Naive thymus-derived CD8-positive, alpha-beta T cell (primary cell): ENCODE measurements at regions of chr6 and their contacts with region 1.

Region 1: GRCh38 chr6:12011276-12012076 is 636 bp upstream of the HIVEP1 start:
- DNase-seq: peak; percentile 81 to 98 (median 96)
- ATAC-seq: peak; percentile 66 to 76
- H3K4me3 Mint-ChIP-seq: peak overlapping the region; percentile 87 to 100 (median 93)
- H3K27ac Mint-ChIP-seq: peak overlapping the region; percentile 90 to 100 (median 98)
- H3K4me1 Mint-ChIP-seq: peaks cover 31 to 60% (median 56%) of the 10 kb centered on the region in 4 donors
- H3K27me3 Mint-ChIP-seq: no peaks in the 10 kb centered on the region

Region 2: GRCh38 chr6:11889572-11889971 is 121.9 kb before region 1 on chr6:
- POLR2A ChIA-PET with region 1: no interaction called
- DNase-seq: no peak
- ATAC-seq: no peak
- H3K4me3 Mint-ChIP-seq: no peak overlapping the region
- H3K27ac Mint-ChIP-seq: no peak overlapping the region
- H3K4me1 Mint-ChIP-seq: no peaks in the 10 kb centered on the region
- H3K27me3 Mint-ChIP-seq: no peaks in the 10 kb centered on the region

Region 3: GRCh38 chr6:12049165-12049564 is 37.7 kb after region 1 on chr6:
- POLR2A ChIA-PET with region 1: interaction called, 11 read pairs
- DNase-seq: no peak
- ATAC-seq: no peak
- H3K4me3 Mint-ChIP-seq: no peak overlapping the region
- H3K27ac Mint-ChIP-seq: peak overlapping the region; percentile 36 to 92 (median 81)
- H3K4me1 Mint-ChIP-seq: peaks cover 31 to 82% (median 72%) of the 10 kb centered on the region in 4 donors
- H3K27me3 Mint-ChIP-seq: no peaks in the 10 kb centered on the region